ENCODE measurements at regions of chr18 and their contacts with region 1.

Region 1: DNA sequence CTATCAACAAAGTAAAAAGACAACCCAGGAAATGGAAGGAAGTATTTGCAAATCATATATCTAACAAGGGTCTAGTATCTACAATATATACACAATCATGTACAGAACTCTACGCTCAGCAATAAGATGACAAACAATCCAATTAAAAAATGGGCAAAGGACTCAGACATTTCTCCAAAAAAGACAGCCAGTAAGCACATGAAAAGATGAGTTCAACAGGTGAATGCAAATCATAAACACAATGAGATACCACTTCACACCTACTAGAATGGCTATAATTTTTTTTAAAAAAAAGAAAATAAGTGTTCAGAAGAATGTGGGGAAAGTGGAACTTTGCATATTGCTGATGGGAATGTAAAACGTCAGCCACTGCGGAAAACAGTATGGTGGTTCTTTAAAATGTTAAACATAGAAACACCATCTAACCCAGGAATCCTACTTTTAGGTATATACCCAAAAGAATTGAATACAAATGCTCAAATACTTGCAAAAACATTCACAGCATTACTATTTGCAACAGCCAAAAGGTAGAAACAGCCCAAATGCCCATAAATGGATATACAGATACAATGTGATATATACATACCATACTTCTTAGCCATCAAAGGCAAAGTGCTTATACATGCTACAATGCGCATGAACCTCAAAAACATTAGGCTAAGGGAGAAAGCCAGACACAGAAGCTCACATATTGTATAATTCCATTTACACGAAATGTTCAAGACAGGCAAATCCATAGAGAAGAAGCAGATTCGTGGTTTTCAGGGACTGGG is 121.2 kb downstream of the CABYR start:
- DNase-seq: no peak
- H3K4me3 Mint-ChIP-seq: no peak overlapping the region
- H3K27ac Mint-ChIP-seq: no peak overlapping the region
- H3K4me1 Mint-ChIP-seq: no peaks in the 10 kb centered on the region
- H3K27me3 Mint-ChIP-seq: no peaks in the 10 kb centered on the region
- CTCF ChIP-seq: no peak

Region 2: DNA sequence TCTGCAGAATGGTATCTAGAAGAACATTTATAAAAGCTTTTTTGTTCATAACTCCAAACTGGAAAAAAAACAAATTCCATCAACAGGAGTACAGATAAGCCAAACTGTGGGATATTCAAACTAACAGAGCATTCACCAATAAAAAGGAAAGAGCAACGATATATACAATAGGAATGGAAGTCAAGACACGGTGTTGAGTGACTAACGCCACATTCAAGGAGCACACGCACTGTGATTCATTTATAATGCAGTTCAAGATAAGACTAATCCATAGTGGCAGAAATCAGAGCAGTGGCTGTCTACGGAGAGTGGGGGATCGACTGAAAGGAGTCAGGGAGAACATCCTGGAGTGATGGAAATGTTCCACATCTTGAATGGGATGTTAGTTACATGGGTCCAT is 50.5 kb before region 1 on chr18:
- CTCF ChIA-PET with region 1: no interaction called
- intact Hi-C with region 1: no loop called
- DNase-seq: peak; percentile 28
- H3K4me3 Mint-ChIP-seq: peak overlapping the region; percentile 33
- H3K27ac Mint-ChIP-seq: peak overlapping the region; percentile 58
- H3K4me1 Mint-ChIP-seq: peaks cover 43% of the 10 kb centered on the region
- H3K27me3 Mint-ChIP-seq: no peaks in the 10 kb centered on the region
- CTCF ChIP-seq: no peak

Region 3: GRCh38 chr18:24246143-24246542 is 13.9 kb before region 1 on chr18:
- CTCF ChIA-PET with region 1: no interaction called
- intact Hi-C with region 1: loop called (anchors 1 kb)
- DNase-seq: no peak
- H3K4me3 Mint-ChIP-seq: no peak overlapping the region
- H3K27ac Mint-ChIP-seq: no peak overlapping the region
- H3K4me1 Mint-ChIP-seq: no peaks in the 10 kb centered on the region
- H3K27me3 Mint-ChIP-seq: no peaks in the 10 kb centered on the region
- CTCF ChIP-seq: no peak

Region 4: DNA sequence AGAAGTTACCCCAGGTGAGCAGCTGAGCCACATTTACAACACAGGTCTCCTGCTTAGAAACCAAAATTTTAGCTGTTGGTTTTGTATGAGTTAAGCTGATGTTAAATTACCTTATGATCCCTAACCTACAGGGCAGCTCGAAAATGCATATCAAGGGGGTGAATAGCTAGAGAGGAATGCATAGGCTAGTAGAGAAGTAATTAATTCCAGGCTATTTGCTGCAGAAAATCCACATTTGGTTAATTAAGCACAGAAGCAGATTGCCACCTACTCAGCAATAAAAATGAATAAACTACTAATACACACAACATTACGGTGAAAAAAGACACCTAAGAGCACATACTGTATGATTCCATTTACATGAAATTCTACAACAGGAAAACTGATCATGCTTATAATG is 46.1 kb after region 1 on chr18:
- CTCF ChIA-PET with region 1: no interaction called
- intact Hi-C with region 1: loop called (anchors 10 kb)
- DNase-seq: no peak
- H3K4me3 Mint-ChIP-seq: no peak overlapping the region
- H3K27ac Mint-ChIP-seq: no peak overlapping the region
- H3K4me1 Mint-ChIP-seq: no peaks in the 10 kb centered on the region
- H3K27me3 Mint-ChIP-seq: no peaks in the 10 kb centered on the region
- CTCF ChIP-seq: no peak